ENCODE measurements at regions of chr3 and their contacts with region 1.

Region 1: DNA sequence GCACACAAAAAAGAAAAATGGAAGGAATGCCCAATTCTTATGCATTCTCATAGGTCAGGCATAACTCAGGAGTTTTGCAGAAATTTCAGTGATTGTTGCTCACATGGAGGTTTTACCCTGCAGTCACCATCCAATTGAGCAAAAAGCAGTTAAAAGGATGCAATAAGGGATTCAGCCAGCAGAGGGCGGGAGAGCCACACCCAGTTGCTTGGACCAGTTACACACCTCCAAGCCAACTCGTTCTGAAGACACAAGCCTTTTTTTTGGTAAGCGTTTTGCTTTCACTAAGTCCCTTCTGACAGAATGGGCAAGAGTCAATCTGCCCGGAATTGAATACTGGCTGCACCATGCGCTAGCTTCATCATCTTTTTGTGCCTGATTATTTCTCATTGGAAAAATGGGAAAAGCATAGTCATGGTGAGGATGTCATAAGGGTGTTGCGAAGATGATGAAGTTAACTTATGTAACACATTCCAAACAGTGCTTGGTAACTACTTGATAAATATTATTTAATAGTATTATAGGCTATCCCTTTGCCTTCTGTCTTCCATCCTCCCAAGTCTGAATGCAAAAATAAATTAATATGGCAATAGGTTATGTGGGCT is 154.4 kb upstream of the SGO1 start:
- DNase-seq: peak; percentile 19 to 81
- ATAC-seq: peak; percentile 73 to 93 (median 78)
- H3K4me3 ChIP-seq: peak overlapping the region in 1 of 10 donors; percentile 5
- H3K27ac ChIP-seq: no peak overlapping the region
- H3K4me1 ChIP-seq: peaks cover 0 to 4% (median 0%) of the 10 kb centered on the region in 9 donors
- H3K27me3 ChIP-seq: no peaks in the 10 kb centered on the region
- CTCF ChIP-seq: peak; percentile 87 to 97 (median 94)

Region 2: DNA sequence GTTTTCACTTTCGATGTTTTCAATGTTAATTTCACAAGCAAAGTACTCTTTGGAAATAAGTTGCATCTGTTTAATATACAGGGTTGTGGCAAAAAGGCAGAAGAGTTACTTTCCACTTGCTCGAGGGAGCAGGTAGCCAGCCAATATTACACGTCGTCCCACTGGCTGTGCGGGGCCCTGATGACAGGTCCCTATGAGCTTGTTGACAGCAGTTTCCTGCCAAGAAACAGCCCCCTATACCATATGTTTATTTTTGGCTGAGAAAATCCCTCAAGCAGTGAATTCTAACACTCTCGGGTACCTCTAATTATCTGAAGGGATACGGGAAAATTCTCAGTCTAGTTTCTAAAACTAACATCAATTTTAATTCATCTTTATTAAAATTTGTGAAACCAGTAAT is 37.7 kb before region 1 on chr3:
- intact Hi-C with region 1: no loop called
- DNase-seq: no peak
- ATAC-seq: no peak
- H3K4me3 ChIP-seq: no peak overlapping the region
- H3K27ac ChIP-seq: no peak overlapping the region
- H3K4me1 ChIP-seq: no peaks in the 10 kb centered on the region
- H3K27me3 ChIP-seq: no peaks in the 10 kb centered on the region
- CTCF ChIP-seq: no peak

Region 3: DNA sequence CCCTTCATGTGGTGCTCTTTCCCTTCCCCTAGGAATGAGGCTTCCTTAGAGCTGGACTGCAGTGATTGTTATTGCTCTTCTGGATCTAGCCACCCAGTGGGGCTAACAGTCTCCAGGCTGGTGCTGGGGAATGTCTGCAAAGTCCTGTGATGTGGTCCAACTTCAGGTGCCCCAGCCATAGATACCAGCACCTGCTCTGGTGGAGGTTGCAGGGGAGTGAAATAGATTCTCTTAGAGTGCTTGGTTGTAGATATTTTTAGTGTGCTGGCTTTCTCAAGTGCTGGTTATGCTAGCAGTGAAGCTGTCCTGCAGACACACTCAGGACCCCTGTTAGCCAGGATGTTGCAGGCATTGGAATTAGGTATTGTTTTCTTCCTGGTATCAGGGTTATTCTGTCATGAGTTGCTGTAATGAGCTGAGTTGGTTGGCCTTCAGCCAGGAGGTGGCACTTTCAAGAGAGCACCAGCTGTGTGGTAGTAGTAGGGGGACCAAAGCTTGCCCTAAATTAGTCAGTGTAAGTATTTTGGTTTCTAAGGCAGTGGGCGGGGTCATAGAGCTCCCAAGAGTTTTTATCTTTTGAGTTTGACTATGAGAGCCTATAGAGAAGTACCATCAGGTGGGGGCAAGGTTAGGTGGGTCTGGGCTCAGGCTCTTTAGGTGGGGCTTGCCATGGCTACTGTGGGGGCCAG is 163.1 kb after region 1 on chr3:
- intact Hi-C with region 1: loop called in 1 of 10 experiments (anchors 10 kb)
- DNase-seq: no peak
- ATAC-seq: no peak
- H3K4me3 ChIP-seq: no peak overlapping the region
- H3K27ac ChIP-seq: no peak overlapping the region
- H3K4me1 ChIP-seq: no peaks in the 10 kb centered on the region
- H3K27me3 ChIP-seq: no peaks in the 10 kb centered on the region
- CTCF ChIP-seq: no peak

Region 4: DNA sequence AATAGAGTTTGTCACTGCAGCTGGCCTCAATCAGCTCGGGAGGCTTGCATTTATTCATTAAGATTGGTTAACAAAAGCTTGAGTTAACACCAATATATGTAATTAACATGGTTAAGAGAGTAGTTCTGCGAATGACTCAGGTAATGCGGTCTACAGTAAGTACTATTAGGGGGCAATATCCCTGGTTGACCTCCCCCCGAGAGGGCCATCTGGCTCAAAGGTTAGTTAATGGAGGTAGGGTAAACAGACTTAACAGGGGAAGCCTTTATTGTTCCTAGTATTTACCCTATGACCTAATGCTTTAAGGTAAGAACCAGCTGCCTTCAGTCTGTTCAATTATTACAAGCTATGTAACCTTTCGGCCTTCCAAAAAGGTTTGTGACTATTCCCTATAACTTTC is 248.8 kb after region 1 on chr3:
- intact Hi-C with region 1: no loop called
- DNase-seq: no peak
- ATAC-seq: no peak
- H3K4me3 ChIP-seq: no peak overlapping the region
- H3K27ac ChIP-seq: no peak overlapping the region
- H3K4me1 ChIP-seq: no peaks in the 10 kb centered on the region
- H3K27me3 ChIP-seq: no peaks in the 10 kb centered on the region
- CTCF ChIP-seq: no peak

Region 5: DNA sequence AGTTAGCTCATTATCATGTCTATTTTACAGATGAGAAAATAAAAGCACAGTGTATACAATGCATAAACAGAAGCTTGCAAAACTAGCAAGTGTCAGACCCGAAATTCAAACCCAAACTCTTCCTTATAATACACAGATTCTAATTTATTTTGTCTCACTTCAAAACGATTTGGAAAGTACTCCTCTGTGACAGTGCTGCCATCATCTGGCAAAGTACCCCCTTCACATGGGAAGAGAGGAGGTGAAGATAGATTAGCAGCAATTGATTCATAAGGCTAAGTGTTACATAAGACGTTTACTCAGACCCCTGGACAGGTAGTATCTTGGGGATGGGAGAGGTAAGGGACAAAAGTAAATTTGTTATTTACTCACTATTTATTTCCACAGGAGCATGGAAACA is 589.6 kb after region 1 on chr3:
- intact Hi-C with region 1: loop called in 2 of 10 experiments (anchors 5 to 10 kb)
- DNase-seq: no peak
- ATAC-seq: no peak
- H3K4me3 ChIP-seq: no peak overlapping the region
- H3K27ac ChIP-seq: no peak overlapping the region
- H3K4me1 ChIP-seq: no peaks in the 10 kb centered on the region
- H3K27me3 ChIP-seq: no peaks in the 10 kb centered on the region
- CTCF ChIP-seq: peak in 8 of 9 donors; percentile 8 to 52 (median 34)

Region 6: DNA sequence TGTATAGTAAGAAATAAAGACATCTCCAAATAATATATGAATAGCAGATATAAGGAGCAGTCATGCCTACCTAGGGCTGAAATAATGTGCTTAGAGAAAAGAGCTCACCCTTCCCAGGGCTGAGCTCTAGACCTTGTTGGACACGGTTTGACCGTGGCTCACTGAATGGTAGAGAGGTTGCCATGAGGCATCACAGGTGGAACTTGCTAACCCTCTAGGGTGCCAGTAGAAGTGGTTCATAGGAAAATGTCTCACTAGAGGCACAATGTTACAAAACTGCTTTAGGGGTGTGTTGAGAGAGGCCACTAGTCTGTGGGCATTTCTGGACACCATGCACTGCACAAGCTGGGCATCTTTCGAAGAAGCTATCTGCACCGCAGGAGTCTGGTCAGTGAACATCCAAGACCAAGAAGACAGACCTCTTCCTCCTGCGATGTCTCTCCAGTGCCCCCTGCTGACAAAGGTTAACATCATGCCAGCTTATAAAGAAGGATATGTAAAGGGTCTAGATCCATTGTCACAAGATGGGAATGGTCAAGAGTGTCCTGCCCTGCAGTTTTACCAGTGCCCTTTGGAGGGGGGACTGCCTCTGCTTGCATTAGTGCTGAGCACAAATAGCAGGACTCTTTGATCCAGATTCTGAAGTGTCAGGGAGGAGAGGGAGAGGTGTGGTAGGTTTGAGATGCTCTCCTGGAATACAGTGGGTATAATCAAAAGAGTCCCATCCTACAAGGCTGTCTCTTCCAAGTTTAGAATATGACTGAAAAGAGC is 1143.8 kb after region 1 on chr3:
- intact Hi-C with region 1: loop called in 1 of 10 experiments (anchors 2 kb)
- DNase-seq: peak; percentile 11 to 64
- ATAC-seq: peak in 7 of 8 donors; percentile 46 to 80 (median 67)
- H3K4me3 ChIP-seq: no peak overlapping the region
- H3K27ac ChIP-seq: no peak overlapping the region
- H3K4me1 ChIP-seq: peaks cover 0 to 1% (median 0%) of the 10 kb centered on the region in 9 donors
- H3K27me3 ChIP-seq: no peaks in the 10 kb centered on the region
- CTCF ChIP-seq: peak; percentile 36 to 74 (median 63)

Region 7: DNA sequence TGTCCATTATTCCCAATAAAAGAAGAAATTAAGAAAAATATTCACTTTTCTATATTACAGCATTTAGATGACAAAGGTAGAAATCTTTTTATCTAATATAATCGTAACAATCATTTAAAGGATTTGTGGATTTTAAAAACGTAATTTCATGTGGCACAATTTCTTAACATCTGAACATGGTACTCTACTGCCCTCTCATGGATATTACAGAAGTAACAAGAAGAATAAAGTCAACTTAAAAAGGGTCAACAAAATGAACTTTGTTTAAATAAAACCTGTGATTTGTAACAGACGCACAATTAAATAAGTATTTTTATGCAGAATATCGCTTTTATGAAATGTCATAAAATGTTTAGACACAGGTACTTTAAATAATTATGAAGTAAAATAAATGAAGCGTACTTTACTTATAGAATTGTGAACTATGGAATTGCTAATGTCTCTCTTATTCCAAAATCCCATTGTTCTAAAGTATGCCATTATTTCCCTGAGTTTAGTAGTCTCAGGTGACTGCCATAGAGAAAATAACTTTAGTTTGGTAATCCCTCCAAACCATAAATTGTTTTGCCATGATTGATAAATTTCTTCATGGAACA is 1777.4 kb after region 1 on chr3:
- intact Hi-C with region 1: loop called in 6 of 10 experiments (anchors 5 to 10 kb)
- DNase-seq: no peak
- ATAC-seq: no peak
- H3K4me3 ChIP-seq: no peak overlapping the region
- H3K27ac ChIP-seq: no peak overlapping the region
- H3K4me1 ChIP-seq: no peaks in the 10 kb centered on the region
- H3K27me3 ChIP-seq: no peaks in the 10 kb centered on the region
- CTCF ChIP-seq: peak; percentile 34 to 80 (median 66)

Measured in heart right ventricle (tissue), 16 donors.